ENCODE measurements at regions of chr3 and their contacts with region 1.

Region 1: DNA sequence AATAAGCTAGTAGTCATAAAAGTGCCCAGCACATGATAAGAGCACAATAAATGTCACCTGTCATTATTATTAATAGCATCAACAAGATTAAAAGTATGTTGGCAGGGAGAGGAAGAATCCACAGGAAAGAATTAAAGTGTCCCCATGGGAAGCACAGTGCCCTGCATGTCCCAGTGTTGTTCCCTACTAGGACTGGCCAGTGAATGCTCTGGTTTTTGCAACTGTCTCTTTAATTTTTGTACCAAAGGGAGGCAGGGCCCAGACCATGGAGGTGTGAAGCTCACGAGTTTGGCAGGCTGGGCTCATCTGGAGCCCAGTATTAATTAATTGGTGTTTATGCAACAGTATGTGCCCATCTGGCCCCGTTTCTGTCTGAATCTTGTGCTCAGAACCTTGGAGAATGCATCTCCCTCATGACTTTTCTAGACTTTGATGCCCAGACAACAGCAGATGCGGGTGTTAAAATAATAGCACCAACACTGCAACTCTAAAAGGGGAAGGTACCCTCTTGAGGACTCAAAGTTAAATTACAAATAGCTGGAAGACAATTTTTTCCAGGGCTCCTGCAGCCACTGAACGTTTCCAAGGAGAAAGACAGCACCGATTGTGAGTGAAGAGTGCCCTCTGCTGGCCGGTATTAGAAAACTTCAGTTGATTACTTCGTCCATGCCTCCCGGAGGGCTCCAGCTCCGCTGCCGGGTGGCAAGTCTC is 71.9 kb upstream of the SPATA12 start:
- DNase-seq: peak; percentile 87
- ATAC-seq: peak; percentile 53
- H3K4me3 ChIP-seq: no peak overlapping the region
- H3K27ac ChIP-seq: no peak overlapping the region
- H3K4me1 ChIP-seq: peaks cover 19% of the 10 kb centered on the region
- H3K27me3 ChIP-seq: no peaks in the 10 kb centered on the region
- CTCF ChIP-seq: peak; percentile 94

Region 2: DNA sequence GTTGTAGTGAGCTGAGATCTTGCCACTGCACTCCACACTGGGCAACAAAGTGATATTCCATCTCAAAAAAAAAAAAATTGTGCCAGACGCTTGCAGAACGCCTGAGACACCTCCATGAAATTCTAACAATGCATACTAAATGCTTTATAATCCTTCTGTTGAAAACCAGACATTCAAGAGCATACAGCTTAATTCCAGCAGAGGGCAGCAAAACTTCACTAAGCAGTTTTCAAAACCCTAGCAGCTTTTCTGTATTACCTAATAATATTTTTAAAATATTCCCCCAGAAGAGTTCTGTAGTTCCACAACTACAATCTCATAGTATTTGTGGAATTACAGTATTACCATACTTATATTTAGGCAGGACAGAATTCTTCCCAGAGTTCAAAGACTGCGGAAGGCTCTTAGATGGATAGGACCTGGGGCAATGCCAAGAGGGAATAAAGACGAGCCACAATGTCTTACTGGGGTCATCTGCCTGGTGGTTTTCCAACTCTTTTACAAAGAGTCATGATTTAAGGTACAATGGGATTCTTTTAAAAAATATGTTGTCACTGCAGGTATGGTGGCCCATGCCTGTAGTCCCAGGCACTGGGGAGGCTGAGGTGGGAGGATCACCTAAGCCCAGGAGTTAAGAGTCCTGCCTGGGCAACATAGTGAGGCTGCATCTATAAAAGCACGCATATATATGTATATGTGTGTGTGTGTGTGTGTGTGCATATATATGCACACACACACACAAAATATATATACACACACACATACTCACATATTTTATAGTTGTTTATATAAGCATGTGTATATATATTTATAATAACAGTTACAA is 285.9 kb before region 1 on chr3:
- CTCF ChIA-PET with region 1: interaction called, 30 read pairs
- POLR2A ChIA-PET with region 1: no interaction called
- intact Hi-C with region 1: loop called (anchors 1 kb)
- DNase-seq: peak; percentile 84
- ATAC-seq: peak; percentile 88
- H3K4me3 ChIP-seq: no peak overlapping the region
- H3K27ac ChIP-seq: no peak overlapping the region
- H3K4me1 ChIP-seq: no peaks in the 10 kb centered on the region
- H3K27me3 ChIP-seq: no peaks in the 10 kb centered on the region
- CTCF ChIP-seq: peak; percentile 93

Region 3: GRCh38 chr3:56855856-56856512 is 132.6 kb before region 1 on chr3:
- CTCF ChIA-PET with region 1: interaction called, 3 read pairs
- POLR2A ChIA-PET with region 1: no interaction called
- intact Hi-C with region 1: loop called (anchors 2 kb)
- DNase-seq: peak; percentile 46
- ATAC-seq: peak; percentile 72
- H3K4me3 ChIP-seq: no peak overlapping the region
- H3K27ac ChIP-seq: no peak overlapping the region
- H3K4me1 ChIP-seq: peaks cover 13% of the 10 kb centered on the region
- H3K27me3 ChIP-seq: no peaks in the 10 kb centered on the region
- CTCF ChIP-seq: peak; percentile 94

Region 4: GRCh38 chr3:56923521-56924224 is 64.9 kb before region 1 on chr3:
- CTCF ChIA-PET with region 1: no interaction called
- POLR2A ChIA-PET with region 1: no interaction called
- intact Hi-C with region 1: loop called (anchors 5 kb)
- DNase-seq: peak; percentile 80
- ATAC-seq: peak; percentile 94
- H3K4me3 ChIP-seq: no peak overlapping the region
- H3K27ac ChIP-seq: peak overlapping the region; percentile 66
- H3K4me1 ChIP-seq: peaks cover 22% of the 10 kb centered on the region
- H3K27me3 ChIP-seq: no peaks in the 10 kb centered on the region
- CTCF ChIP-seq: no peak

Region 5: DNA sequence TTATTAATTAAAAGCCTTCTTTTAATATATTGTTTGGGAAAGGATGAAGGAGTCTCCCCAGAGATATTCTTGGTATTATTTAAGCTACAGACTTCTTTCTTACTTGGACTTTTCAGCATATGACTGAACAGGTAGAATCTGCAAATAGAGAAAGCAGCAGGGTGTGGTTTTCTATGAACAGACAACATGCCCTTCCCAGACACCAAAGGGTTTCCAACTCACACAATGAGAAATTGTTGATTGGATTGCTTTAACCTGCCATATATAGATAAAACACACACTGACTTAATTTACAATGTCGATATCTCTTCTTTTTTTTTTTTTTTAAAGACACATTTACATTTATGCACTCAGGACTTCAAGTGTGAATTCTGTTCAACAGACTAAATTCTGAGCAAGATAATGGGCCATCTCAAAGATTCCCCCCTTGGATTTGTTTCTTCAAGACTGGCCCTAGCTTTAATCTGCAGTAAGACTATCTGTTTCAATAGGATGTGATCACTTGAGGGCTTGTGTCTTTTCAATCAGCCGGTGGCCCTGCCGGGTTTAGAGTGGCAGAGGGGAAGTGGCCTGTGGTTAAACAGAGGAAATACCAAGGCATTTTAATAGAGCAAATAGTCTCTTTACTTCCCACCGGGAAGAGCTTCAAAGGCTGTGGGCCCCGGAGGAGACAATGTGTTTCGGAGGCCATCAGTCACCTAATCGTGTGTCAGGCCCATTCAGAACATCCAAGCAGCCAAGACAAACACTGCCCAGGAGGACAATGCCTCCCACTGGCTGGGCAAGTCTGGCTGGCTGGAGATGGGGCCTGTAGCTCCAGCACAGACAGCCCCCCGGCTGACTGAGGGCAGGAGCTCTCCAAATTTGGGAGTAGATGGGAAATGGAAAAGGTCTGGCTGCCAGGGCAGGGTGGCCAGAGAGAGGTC is 170.5 kb after region 1 on chr3:
- CTCF ChIA-PET with region 1: no interaction called
- POLR2A ChIA-PET with region 1: no interaction called
- intact Hi-C with region 1: loop called (anchors 5 kb)
- DNase-seq: peak; percentile 91
- ATAC-seq: peak; percentile 89
- H3K4me3 ChIP-seq: peak overlapping the region; percentile 5; the same call in 1 of the 2 replicates
- H3K27ac ChIP-seq: no peak overlapping the region
- H3K4me1 ChIP-seq: peaks cover 23% of the 10 kb centered on the region
- H3K27me3 ChIP-seq: no peaks in the 10 kb centered on the region
- CTCF ChIP-seq: peak; percentile 20; the same call in 1 of the 2 replicates

Measured in PC-3 (cell line).